AG04450 (cell line): ENCODE measurements at regions of chr1 and their contacts with region 1.

Region 1: DNA sequence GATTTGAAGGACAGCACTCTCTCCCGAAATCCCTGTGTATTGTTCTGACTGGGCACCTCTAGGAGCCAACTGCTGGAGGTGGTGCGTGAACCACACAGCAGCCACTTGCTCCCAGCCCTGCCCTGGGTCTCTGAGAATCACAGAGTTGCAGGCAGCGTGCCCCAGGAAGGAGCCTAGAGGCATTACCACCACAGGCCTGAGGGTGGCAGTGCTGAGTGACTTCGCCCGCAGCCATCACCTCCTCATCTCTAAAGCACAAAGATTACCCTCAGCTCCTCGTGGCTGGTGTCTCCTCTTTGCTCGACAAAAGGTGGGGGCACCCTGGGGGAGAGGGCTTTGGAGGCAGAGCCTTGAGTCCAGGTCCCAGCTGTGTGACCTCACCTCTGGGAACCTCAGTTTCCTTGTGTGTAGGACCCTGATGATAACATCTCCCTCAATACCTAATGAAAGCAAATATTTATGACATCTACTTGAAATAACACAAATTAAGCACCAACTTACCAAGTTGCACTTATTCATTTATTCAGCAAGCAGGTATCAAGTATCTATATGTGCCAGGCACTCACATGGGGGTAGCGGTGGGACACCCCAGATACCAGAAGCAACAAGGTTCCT is 86.3 kb downstream of the VWA5B1 start:
- DNase-seq: no peak
- H3K4me3 ChIP-seq: no peak overlapping the region
- H3K27ac ChIP-seq: no peak overlapping the region
- H3K27me3 ChIP-seq: peaks cover 17% of the 10 kb centered on the region
- CTCF ChIP-seq: peak; percentile 88

Region 2: GRCh38 chr1:20361806-20362640 is 15.0 kb before region 1 on chr1:
- CTCF ChIA-PET with region 1: interaction called, 13 read pairs
- POLR2A ChIA-PET with region 1: interaction called, 3 read pairs
- DNase-seq: no peak
- H3K4me3 ChIP-seq: no peak overlapping the region
- H3K27ac ChIP-seq: no peak overlapping the region
- H3K27me3 ChIP-seq: peaks cover 52% of the 10 kb centered on the region
- CTCF ChIP-seq: peak; percentile 84

Region 3: DNA sequence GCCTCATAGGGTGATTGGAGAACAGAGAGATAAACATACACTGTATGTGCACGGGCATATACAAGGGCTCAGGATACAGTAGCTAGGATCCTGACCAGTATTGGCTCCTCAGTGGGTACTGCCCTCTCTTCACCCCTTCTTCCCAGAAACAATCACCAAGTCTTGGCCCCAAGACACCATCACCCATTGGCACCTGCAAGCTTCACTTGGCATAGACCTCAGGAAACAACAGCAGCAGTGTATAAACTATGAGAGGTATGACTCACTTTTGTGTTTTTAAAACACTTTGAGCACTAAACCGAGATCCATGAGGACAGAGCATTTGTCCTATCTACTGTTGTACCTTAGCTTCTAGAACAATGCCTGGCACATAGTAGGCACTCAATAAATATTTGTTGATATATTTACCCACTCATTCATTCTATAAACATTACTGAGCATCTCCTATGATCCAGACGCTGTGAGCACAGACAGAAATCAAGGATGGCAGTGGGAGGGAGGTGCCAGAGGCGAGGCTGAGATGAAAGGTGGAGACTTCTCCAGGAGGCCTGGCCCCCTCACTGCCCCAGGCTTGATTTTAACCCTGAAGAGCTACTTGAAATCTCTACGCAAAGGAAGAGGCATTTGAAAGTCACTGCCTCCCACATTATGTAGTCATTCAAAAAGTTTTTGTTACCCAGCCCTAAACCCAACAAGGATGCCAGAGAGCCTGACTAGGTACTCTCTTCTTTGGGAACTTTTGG is 13.8 kb after region 1 on chr1:
- CTCF ChIA-PET with region 1: interaction called, 18 read pairs
- POLR2A ChIA-PET with region 1: interaction called, 3 read pairs
- DNase-seq: no peak
- H3K4me3 ChIP-seq: no peak overlapping the region
- H3K27ac ChIP-seq: no peak overlapping the region
- H3K27me3 ChIP-seq: peaks cover 60% of the 10 kb centered on the region
- CTCF ChIP-seq: no peak